Heart right ventricle (tissue), 16 donors: ENCODE measurements at regions of chr4 and their contacts with region 1.

Region 1: DNA sequence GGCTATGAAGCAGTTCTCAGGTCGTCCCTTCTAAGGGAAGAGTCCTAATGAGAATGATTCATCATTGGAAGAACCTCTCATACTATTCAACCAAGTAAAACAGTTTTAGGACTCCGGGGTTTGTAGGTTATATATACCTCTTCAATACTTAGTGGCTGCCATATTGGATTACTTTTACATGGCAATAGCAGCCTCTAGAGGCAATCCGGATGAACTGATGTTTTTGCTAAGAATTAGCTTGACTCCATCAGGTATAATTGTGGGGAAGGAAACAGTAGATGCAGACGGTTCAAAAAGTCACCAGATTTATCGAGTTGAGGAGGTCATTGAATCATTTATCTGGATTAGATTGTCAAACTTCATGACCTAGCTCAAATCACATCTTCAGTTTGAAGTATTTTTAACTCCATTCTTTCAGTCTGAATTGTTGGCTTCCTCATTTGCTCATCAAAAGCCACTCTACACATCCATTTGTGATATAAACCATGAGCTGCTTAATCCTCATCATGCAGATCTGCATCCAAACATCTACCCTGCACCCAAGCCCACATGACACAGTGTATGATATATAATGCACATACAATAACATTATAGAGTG is 28.4 kb downstream of the GUCY1B1 start:
- DNase-seq: no peak
- ATAC-seq: peak; percentile 73 to 91 (median 87)
- H3K4me3 ChIP-seq: no peak overlapping the region
- H3K27ac ChIP-seq: no peak overlapping the region
- H3K4me1 ChIP-seq: peaks cover 0 to 57% (median 7%) of the 10 kb centered on the region in 9 donors
- H3K27me3 ChIP-seq: no peaks in the 10 kb centered on the region
- CTCF ChIP-seq: peak; percentile 51 to 90 (median 73)

Region 2: GRCh38 chr4:155403886-155404285 is 383.3 kb before region 1 on chr4:
- intact Hi-C with region 1: loop called in 8 of 10 experiments (anchors 2 to 10 kb)
- DNase-seq: no peak
- ATAC-seq: peak in 5 of 8 donors; percentile 44 to 74 (median 61)
- H3K4me3 ChIP-seq: no peak overlapping the region
- H3K27ac ChIP-seq: no peak overlapping the region
- H3K4me1 ChIP-seq: no peaks in the 10 kb centered on the region
- H3K27me3 ChIP-seq: no peaks in the 10 kb centered on the region
- CTCF ChIP-seq: peak in 7 of 9 donors; percentile 42 to 72 (median 62)